ENCODE measurements at regions of chr14 and their contacts with region 1.

Region 1: GRCh38 chr14:65356327-65356852 is 56.1 kb upstream of the FUT8 start:
- DNase-seq: no peak
- ATAC-seq: no peak
- H3K4me3 ChIP-seq: no peak overlapping the region
- H3K4me3 Mint-ChIP-seq: no peak overlapping the region
- H3K27ac ChIP-seq: peak overlapping the region; percentile 40 to 61
- H3K27ac Mint-ChIP-seq: peak overlapping the region; percentile 79
- H3K4me1 ChIP-seq: peaks cover 58 to 84% of the 10 kb centered on the region in 2 donors
- H3K4me1 Mint-ChIP-seq: peaks cover 73% of the 10 kb centered on the region
- H3K27me3 ChIP-seq: no peaks in the 10 kb centered on the region
- H3K27me3 Mint-ChIP-seq: no peaks in the 10 kb centered on the region
- CTCF ChIP-seq: no peak

Region 2: GRCh38 chr14:65302571-65303189 is 53.7 kb before region 1 on chr14:
- CTCF ChIA-PET with region 1: interaction called, 5 read pairs
- POLR2A ChIA-PET with region 1: interaction called, 7 read pairs
- intact Hi-C with region 1: loop called (anchors 5 kb)
- DNase-seq: peak; percentile 44
- ATAC-seq: peak; percentile 8
- H3K4me3 ChIP-seq: no peak overlapping the region
- H3K4me3 Mint-ChIP-seq: peak overlapping the region; percentile 56
- H3K27ac ChIP-seq: peak overlapping the region; percentile 71 to 80
- H3K27ac Mint-ChIP-seq: peak overlapping the region; percentile 98
- H3K4me1 ChIP-seq: peaks cover 54 to 87% of the 10 kb centered on the region in 2 donors
- H3K4me1 Mint-ChIP-seq: peaks cover 75% of the 10 kb centered on the region
- H3K27me3 ChIP-seq: no peaks in the 10 kb centered on the region
- H3K27me3 Mint-ChIP-seq: no peaks in the 10 kb centered on the region
- CTCF ChIP-seq: no peak

Region 3: DNA sequence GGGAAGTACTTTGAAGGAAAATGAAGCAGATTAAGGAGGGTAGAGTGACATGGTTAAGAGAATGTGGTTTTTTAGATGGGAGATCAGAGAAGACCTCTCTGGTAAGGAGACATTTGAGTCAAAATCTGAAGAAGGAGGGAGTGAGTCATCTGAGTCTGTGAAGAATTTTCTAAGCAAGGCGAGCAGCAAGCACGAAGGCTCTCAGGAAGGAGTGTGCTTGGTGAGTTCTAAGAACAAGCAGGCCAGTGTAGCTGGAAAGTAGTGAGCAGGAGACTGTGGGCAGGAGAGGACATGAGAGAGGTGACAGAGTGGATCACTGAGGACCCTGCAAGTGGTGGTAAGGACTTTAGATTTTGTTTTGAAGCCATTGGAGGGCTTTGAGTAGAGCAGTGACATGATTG is 20.2 kb before region 1 on chr14:
- CTCF ChIA-PET with region 1: interaction called, 9 read pairs
- POLR2A ChIA-PET with region 1: no interaction called
- intact Hi-C with region 1: loop called (anchors 2 kb)
- DNase-seq: no peak
- ATAC-seq: peak; percentile 37
- H3K4me3 ChIP-seq: no peak overlapping the region
- H3K4me3 Mint-ChIP-seq: peak overlapping the region; percentile 7
- H3K27ac ChIP-seq: no peak overlapping the region
- H3K27ac Mint-ChIP-seq: peak overlapping the region; percentile 72
- H3K4me1 ChIP-seq: peaks cover 39 to 57% of the 10 kb centered on the region in 2 donors
- H3K4me1 Mint-ChIP-seq: peaks cover 52% of the 10 kb centered on the region
- H3K27me3 ChIP-seq: no peaks in the 10 kb centered on the region
- H3K27me3 Mint-ChIP-seq: no peaks in the 10 kb centered on the region
- CTCF ChIP-seq: no peak

Region 4: GRCh38 chr14:65387628-65388027 is 31.2 kb after region 1 on chr14:
- CTCF ChIA-PET with region 1: interaction called, 3 read pairs
- POLR2A ChIA-PET with region 1: no interaction called
- intact Hi-C with region 1: loop called (anchors 5 kb)
- DNase-seq: no peak
- ATAC-seq: no peak
- H3K4me3 ChIP-seq: no peak overlapping the region
- H3K4me3 Mint-ChIP-seq: no peak overlapping the region
- H3K27ac ChIP-seq: no peak overlapping the region
- H3K27ac Mint-ChIP-seq: no peak overlapping the region
- H3K4me1 ChIP-seq: no peaks in the 10 kb centered on the region
- H3K4me1 Mint-ChIP-seq: peaks cover 5% of the 10 kb centered on the region
- H3K27me3 ChIP-seq: no peaks in the 10 kb centered on the region
- H3K27me3 Mint-ChIP-seq: no peaks in the 10 kb centered on the region
- CTCF ChIP-seq: no peak

Region 5: GRCh38 chr14:66395300-66395699 is 1038.9 kb after region 1 on chr14:
- CTCF ChIA-PET with region 1: no interaction called
- POLR2A ChIA-PET with region 1: no interaction called
- intact Hi-C with region 1: no loop called
- DNase-seq: no peak
- ATAC-seq: no peak
- H3K4me3 ChIP-seq: no peak overlapping the region
- H3K4me3 Mint-ChIP-seq: no peak overlapping the region
- H3K27ac ChIP-seq: no peak overlapping the region
- H3K27ac Mint-ChIP-seq: no peak overlapping the region
- H3K4me1 ChIP-seq: no peaks in the 10 kb centered on the region
- H3K4me1 Mint-ChIP-seq: no peaks in the 10 kb centered on the region
- H3K27me3 ChIP-seq: no peaks in the 10 kb centered on the region
- H3K27me3 Mint-ChIP-seq: peaks cover 4% of the 10 kb centered on the region
- CTCF ChIP-seq: no peak